Cardiac septum (tissue), 1 donor: ENCODE measurements at regions of chr4 and their contacts with region 1.

Region 1: DNA sequence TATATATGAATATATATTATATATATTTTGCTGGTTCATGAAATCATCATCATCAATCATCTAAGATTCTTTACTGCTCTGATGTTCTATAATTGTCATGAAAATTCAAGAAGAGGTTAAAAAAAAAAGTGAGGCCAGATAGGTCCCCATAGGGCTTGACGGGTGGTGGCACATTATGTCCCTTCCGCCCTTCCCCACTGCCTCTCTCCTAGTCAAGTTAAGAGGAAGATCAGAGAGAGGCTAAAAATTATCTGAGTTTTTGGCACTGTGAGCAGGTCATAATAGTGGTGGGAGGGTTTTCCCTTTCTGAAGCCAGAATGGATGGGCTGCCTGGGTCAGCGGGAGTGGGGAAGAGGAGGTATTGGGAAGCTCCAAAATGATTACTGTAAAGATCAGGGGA is 5.4 kb downstream of the SYNPO2 start:
- DNase-seq: no peak

Region 2: GRCh38 chr4:118757761-118758251 is 136.2 kb before region 1 on chr4:
- intact Hi-C with region 1: loop called (anchors 5 kb)
- DNase-seq: no peak

Region 3: GRCh38 chr4:119025916-119026661 is 132.1 kb after region 1 on chr4:
- intact Hi-C with region 1: loop called (anchors 5 kb)
- DNase-seq: no peak